Right ventricle myocardium superior (tissue), 1 donor: ENCODE measurements at regions of chr10 and their contacts with region 1.

Region 1: DNA sequence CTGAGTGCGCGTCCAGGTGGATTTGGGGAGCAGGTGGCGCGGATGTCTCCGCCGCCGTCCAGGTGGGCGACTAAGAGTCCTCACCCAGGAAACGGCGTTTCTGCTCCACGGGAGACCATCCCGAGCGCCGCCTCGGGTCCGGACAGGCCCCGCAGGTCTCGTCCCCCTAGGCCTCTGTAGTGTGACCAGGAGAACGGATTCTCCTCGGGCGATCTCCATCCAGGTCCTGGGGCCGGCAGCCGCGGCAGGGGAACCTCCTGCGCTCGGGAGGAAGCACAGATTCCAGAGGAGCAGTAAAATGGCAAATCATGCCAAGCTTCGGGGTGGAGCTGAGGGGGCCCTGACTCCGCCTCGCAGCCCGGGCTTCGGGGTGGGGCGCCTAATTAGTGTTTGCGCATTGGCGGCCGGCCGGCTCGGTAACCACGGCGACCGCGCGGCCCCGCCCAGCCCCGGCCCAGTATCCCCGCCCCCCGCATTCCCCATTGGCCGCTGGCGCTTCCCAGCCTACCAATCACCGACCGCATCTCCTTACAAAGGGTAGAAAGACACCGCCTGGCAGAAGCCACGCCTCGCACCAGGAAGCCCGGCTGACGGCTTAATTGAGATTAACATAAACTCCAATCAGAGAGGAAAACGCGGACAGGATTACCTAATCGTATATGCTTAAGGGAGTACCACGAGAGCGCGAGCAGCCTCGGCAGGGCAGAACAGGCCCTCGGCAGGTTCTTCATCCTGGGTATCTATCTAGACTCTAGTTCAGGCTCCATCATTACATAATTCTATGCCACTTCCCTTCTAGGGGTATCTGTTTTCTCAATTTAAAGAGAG is 168.6 kb downstream of the ARHGAP12 start:
- DNase-seq: peak; percentile 97
- ATAC-seq: peak; percentile 95

Region 2: GRCh38 chr10:31603235-31604087 is 156.6 kb before region 1 on chr10:
- intact Hi-C with region 1: loop called (anchors 10 kb)
- DNase-seq: peak; percentile 98
- ATAC-seq: peak; percentile 95

Region 3: DNA sequence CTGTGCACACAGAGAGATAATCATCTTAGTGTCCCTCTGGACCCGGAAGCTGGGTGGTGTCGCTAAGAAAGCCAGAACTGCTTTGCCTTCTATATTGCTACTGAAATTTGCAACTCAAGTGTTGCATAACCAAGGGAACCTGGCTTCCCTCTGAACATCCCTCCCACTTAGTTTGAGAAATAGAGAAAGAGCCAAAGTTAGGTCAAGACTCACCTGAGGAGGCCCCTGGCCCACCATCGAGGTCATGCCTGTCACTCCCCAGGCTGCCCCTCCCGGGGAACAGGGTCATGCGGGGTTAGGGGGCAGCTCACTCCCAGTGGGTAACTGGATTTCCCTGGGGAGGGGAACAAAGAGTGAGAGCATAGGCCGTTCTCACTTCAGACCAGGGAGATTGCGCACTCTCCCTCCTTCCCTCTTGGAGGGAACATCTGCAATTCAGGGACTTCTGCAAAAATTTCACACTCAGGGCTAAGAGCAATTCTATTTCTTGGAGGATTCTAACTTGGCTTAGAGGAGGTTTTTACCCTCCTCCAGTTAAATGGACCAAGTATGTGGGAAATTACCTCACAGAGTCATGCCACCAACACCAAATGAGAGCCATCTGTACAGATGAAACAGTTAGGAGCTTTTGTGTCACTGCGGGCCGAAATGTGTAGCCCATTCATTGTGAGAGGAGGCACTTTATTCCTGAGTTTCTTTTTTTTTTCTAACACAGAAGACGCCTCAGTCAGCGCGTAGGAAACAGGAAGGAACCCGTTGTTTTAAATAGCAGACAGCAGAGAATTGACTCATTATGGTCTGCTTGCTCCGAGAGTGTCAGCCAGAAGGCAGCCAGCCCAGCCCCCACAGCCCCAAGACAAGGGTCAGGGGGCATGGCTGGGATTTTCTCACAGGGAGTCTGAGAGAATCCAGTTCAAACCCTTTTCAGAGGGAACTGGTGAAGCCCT is 52.6 kb before region 1 on chr10:
- intact Hi-C with region 1: loop called (anchors 5 kb)
- DNase-seq: peak; percentile 83
- ATAC-seq: peak; percentile 83